Breast epithelium (tissue), 4 donors: ENCODE measurements at regions of chr3 and their contacts with region 1.

Region 1: DNA sequence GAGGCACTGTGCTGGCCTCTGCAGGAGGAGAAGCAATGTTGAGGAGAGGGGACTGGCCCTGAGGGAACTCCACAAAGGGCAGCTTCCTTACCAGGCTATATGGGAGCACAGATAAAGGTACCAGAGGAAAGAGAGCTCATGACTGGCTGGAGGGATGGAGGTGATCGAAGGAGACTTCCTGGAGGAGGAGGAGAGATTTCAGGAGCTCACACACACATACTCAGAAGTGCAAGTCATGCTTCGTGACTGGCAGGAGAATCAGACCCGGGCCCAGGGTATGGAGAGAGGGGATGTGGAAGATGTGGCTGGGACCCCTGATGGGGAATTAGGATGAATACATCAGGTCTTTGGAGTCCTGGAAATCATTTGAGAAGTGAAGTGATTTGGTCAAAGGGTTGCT is 85.4 kb downstream of the ABHD5 start:
- DNase-seq: no peak
- H3K4me3 ChIP-seq: no peak overlapping the region
- H3K27ac ChIP-seq: no peak overlapping the region
- H3K4me1 ChIP-seq: no peaks in the 10 kb centered on the region
- H3K27me3 ChIP-seq: no peaks in the 10 kb centered on the region
- CTCF ChIP-seq: no peak
- POLR2A ChIP-seq: no peak

Region 2: GRCh38 chr3:43817825-43818224 is 41.7 kb after region 1 on chr3:
- intact Hi-C with region 1: loop called (anchors 1 kb)
- DNase-seq: no peak
- H3K4me3 ChIP-seq: no peak overlapping the region
- H3K27ac ChIP-seq: no peak overlapping the region
- H3K4me1 ChIP-seq: no peaks in the 10 kb centered on the region
- H3K27me3 ChIP-seq: no peaks in the 10 kb centered on the region
- CTCF ChIP-seq: no peak
- POLR2A ChIP-seq: no peak